ENCODE measurements at regions of chr5 and their contacts with region 1.

Region 1: DNA sequence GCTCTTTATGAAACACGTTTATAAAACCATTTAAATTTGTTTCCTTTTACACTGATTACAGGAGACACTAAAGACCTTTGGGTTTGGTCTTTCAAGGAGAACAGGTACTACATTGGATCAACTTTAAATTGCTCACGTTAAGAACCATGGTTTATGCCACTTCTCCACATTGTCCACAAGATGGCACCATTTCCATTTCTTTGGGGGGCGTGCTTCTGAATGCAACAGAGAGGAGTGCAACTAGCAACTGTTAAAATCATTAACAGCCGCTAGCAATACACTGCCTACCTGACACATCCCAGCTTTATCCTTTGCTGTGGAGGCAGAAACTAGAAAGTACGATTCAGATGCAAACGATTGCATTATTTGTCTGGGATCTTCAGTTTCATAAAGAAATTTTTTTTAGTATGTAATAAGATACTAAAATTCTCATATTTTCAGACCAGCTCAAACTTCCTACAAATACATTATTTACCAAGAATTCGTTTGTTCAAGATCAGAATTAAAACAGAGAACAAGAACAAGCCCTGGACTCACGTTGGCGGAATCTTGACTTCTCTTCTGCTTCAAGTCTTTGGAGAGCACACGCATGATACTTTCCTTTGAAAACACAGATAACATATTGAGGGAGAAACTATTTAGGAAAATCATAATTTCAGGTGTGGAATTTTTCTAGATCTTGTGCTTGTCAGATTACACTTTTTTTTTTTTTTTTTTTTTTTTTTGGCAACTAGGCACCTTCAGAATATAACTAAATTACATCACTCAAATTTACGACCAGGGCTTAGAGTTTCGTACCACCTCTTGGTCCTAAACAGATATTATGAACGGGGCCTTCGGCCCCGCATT is 702 bp downstream of the CDC20B start:
- DNase-seq: peak; percentile 80
- ATAC-seq: peak; percentile 53
- H3K4me3 Mint-ChIP-seq: peak overlapping the region; percentile 81
- H3K27ac Mint-ChIP-seq: no peak overlapping the region
- H3K4me1 Mint-ChIP-seq: peaks cover 30% of the 10 kb centered on the region
- H3K27me3 Mint-ChIP-seq: peaks cover 75% of the 10 kb centered on the region

Region 2: DNA sequence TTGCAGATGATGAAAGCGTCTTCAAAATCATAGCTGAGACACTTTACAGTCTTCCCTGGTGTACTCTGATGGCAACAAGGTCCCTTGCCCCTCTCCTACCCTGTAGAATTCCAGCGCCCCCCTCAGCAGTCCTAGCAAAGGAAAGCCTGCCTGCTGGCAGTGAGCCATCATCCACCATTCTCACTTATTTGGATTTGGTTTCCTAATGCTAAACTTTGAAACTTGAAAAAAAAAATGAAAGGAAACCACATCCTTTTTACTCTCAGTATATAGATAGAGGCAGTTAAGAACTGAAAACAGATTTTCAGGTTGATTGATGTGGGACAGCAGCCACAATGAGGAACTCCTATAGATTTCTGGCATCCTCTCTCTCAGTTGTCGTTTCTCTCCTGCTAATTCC is 69.9 kb before region 1 on chr5 and contains the start of gene GZMA:
- CTCF ChIA-PET with region 1: no interaction called
- DNase-seq: peak; percentile 68
- ATAC-seq: peak; percentile 62
- H3K4me3 Mint-ChIP-seq: peak within 1 kb of the TSS; percentile 91
- H3K27ac Mint-ChIP-seq: peak within 1 kb of the TSS; percentile 97
- H3K4me1 Mint-ChIP-seq: peaks cover 73% of the 10 kb centered on the region
- H3K27me3 Mint-ChIP-seq: no peaks in the 10 kb centered on the region
- total RNA-seq, gene GZMA: 927 to 1,065 TPM

Region 3: DNA sequence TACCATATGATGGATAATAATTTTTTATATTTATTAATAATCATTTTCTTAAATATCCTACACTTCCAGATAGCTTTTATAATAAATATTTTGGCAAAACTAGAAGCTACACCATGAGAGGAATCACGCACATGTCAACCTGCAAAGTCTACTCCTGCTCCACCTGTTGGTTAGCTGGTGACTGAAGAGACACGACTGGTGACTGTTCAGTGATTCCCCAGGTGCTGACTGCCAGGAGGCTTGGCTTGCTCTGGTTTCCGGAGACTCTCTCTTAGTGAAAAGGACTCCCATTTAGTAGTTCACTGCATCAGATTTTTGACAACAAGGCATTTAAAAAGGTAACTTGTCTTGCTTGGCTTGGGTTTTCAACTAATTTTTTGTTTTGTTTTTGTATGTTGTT is 48.9 kb before region 1 on chr5:
- CTCF ChIA-PET with region 1: no interaction called
- DNase-seq: no peak
- ATAC-seq: no peak
- H3K4me3 Mint-ChIP-seq: no peak overlapping the region
- H3K27ac Mint-ChIP-seq: no peak overlapping the region
- H3K4me1 Mint-ChIP-seq: peaks cover 11% of the 10 kb centered on the region
- H3K27me3 Mint-ChIP-seq: no peaks in the 10 kb centered on the region

Region 4: DNA sequence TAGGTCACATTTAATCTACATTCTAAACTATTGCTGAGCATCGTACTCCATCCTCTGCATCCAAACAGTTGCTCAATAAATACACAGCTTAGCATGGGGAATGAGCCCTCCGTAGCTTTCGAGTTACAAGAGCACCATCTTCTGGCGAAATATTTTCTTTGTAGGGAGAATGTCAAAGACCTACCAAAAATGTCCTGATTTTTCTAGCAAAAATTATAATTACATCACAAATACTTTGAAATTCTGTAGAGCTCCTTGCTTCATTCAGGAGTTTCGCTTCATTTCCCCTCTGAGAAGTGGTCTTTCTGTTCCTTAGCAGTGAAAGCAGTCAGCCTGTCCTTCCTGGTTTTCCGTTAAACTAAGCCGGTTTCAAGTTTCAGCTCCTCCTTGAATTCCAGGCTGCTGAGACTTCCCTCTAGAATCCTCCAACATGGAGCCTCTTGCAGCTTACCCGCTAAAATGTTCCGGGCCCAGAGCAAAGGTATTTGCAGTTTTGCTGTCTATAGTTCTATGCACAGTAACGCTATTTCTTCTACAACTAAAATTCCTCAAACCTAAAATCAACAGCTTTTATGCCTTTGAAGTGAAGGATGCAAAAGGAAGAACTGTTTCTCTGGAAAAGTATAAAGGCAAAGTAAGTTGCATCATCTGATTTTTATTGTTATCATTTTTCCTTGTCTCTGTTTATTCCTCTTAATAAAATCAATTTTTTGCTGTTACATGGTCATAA is 12.3 kb before region 1 on chr5 and contains the start of gene GPX8:
- CTCF ChIA-PET with region 1: interaction called, 15 read pairs
- DNase-seq: no peak
- ATAC-seq: peak; percentile 76
- H3K4me3 Mint-ChIP-seq: no peak within 1 kb of the TSS
- H3K27ac Mint-ChIP-seq: no peak within 1 kb of the TSS
- H3K4me1 Mint-ChIP-seq: peaks cover 4% of the 10 kb centered on the region
- H3K27me3 Mint-ChIP-seq: peaks cover 45% of the 10 kb centered on the region
- total RNA-seq, gene GPX8: not detected

Region 5: DNA sequence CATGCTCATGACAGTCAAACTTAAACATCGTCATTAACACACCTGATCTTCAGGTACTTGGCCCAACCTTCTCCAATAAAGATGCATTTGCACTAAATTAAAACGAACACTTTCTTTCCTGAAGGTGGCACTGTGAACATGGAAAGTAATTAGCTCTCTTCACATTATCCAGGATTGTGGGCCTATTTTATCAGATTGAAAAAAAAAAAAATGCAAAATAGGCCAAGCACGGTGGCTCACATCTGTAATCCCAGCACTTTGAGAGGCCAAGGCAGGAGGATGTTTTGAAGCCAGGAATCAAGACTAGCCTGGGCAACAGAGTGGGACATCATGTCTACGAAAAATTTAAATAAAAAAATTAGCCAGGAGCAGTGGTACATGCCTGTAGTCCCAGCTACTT is 15.1 kb after region 1 on chr5:
- CTCF ChIA-PET with region 1: interaction called, 11 read pairs
- DNase-seq: no peak
- ATAC-seq: no peak
- H3K4me3 Mint-ChIP-seq: no peak overlapping the region
- H3K27ac Mint-ChIP-seq: no peak overlapping the region
- H3K4me1 Mint-ChIP-seq: no peaks in the 10 kb centered on the region
- H3K27me3 Mint-ChIP-seq: peaks cover 65% of the 10 kb centered on the region

Region 6: DNA sequence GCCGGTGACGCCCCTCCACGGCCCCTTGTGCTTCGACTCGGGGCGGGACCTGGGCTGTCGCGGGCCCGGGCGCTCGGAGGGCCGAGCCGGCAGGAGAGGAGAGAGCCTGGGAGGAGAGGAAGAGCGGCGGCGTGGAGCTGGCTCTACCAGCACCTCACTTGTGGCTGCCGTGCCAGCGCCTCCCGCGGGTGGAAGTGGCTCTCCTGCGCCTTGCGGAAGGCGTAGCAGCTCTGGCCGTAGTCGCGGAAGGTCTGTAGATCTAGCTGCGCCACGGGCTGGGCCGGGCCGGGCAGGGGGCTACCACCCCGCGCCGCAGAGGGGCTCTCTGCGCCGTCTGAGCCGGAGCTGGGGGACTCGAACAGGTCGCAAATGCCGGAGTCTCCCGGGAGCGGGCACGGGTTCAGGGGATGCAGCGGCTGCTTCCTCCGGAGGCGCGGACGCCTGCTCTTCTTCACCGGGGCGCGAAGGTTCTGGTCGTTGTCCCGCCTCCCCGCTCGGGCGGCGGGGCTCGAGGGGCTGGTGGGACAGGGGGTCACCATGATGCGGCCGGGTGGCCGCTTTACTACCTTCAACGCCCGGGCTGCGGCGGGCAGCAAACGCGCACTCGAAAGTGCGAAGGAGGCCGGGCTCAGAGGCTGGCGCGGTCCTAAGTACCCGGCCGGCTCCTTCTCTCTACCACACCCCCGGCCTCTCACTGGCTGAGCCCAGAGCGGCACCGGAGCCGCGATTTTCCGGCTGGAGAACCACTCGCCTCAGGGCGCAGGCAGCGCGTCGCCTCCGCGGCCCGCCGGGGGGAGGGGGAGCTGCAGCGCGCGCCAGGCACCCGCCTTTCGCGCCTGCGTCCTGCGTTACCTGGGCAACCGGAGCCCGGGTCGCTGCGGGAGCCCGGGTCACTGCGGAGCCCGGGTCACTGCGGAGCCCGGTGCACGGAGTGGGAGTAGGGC is 61.0 kb after region 1 on chr5 and contains the start of gene CCNO:
- CTCF ChIA-PET with region 1: interaction called, 73 read pairs
- DNase-seq: peak; percentile 80
- ATAC-seq: peak; percentile 87
- H3K4me3 Mint-ChIP-seq: peak within 1 kb of the TSS; percentile 72
- H3K27ac Mint-ChIP-seq: peak within 1 kb of the TSS; percentile 33
- H3K4me1 Mint-ChIP-seq: peaks cover 30% of the 10 kb centered on the region
- H3K27me3 Mint-ChIP-seq: peaks cover 78% of the 10 kb centered on the region
- total RNA-seq, gene CCNO: 0.26 TPM